Breast epithelium (tissue), 4 donors: ENCODE measurements at regions of chr4 and their contacts with region 1.

Region 1: GRCh38 chr4:158609116-158609515 is 62.6 kb downstream of the C4orf46 start:
- DNase-seq: no peak
- H3K4me3 ChIP-seq: no peak overlapping the region
- H3K27ac ChIP-seq: no peak overlapping the region
- H3K4me1 ChIP-seq: no peaks in the 10 kb centered on the region
- H3K27me3 ChIP-seq: no peaks in the 10 kb centered on the region
- CTCF ChIP-seq: no peak
- POLR2A ChIP-seq: no peak

Region 2: GRCh38 chr4:158219623-158220022 is 389.5 kb before region 1 on chr4:
- intact Hi-C with region 1: loop called (anchors 5 kb)
- DNase-seq: no peak
- H3K4me3 ChIP-seq: no peak overlapping the region
- H3K27ac ChIP-seq: no peak overlapping the region
- H3K4me1 ChIP-seq: no peaks in the 10 kb centered on the region
- H3K27me3 ChIP-seq: no peaks in the 10 kb centered on the region
- CTCF ChIP-seq: no peak
- POLR2A ChIP-seq: no peak

Region 3: GRCh38 chr4:158630893-158631292 is 21.8 kb after region 1 on chr4:
- intact Hi-C with region 1: loop called (anchors 2 kb)
- DNase-seq: no peak
- H3K4me3 ChIP-seq: no peak overlapping the region
- H3K27ac ChIP-seq: no peak overlapping the region
- H3K4me1 ChIP-seq: no peaks in the 10 kb centered on the region
- H3K27me3 ChIP-seq: no peaks in the 10 kb centered on the region
- CTCF ChIP-seq: no peak
- POLR2A ChIP-seq: no peak